HCT116 (cell line): ENCODE measurements at regions of chr7 and their contacts with region 1.

Region 1: GRCh38 chr7:10889266-10889898 is 84.3 kb upstream of the PHF14 start:
- DNase-seq: peak; percentile 48
- ATAC-seq: peak; percentile 91
- H3K4me3 ChIP-seq: no peak overlapping the region
- H3K27ac ChIP-seq: no peak overlapping the region
- H3K4me1 ChIP-seq: no peaks in the 10 kb centered on the region; a peak in 1 of 4 replicates
- H3K27me3 ChIP-seq: no peaks in the 10 kb centered on the region
- CTCF ChIP-seq: peak; percentile 51 to 94 (median 73); a peak in 5 of 6 replicates
- POLR2A ChIP-seq: no peak
- RAD21 ChIP-seq: peak; percentile 84

Region 2: GRCh38 chr7:10412422-10413019 is 476.9 kb before region 1 on chr7:
- CTCF ChIA-PET with region 1: interaction called, 3 read pairs
- POLR2A ChIA-PET with region 1: no interaction called
- RAD21 ChIA-PET with region 1: no interaction called
- intact Hi-C with region 1: loop called (anchors 10 kb)
- DNase-seq: peak; percentile 16
- ATAC-seq: peak; percentile 54; the same call in 1 of the 2 replicates
- H3K4me3 ChIP-seq: no peak overlapping the region
- H3K27ac ChIP-seq: no peak overlapping the region
- H3K4me1 ChIP-seq: no peaks in the 10 kb centered on the region
- H3K27me3 ChIP-seq: no peaks in the 10 kb centered on the region
- CTCF ChIP-seq: peak; percentile 20 to 54 (median 51); a peak in 4 of 6 replicates
- POLR2A ChIP-seq: no peak
- RAD21 ChIP-seq: peak; percentile 53

Region 3: GRCh38 chr7:10637991-10638390 is 251.4 kb before region 1 on chr7:
- CTCF ChIA-PET with region 1: no interaction called
- POLR2A ChIA-PET with region 1: no interaction called
- RAD21 ChIA-PET with region 1: no interaction called
- intact Hi-C with region 1: loop called (anchors 2 kb)
- DNase-seq: no peak
- ATAC-seq: no peak
- H3K4me3 ChIP-seq: no peak overlapping the region
- H3K27ac ChIP-seq: no peak overlapping the region
- H3K4me1 ChIP-seq: no peaks in the 10 kb centered on the region
- H3K27me3 ChIP-seq: no peaks in the 10 kb centered on the region
- CTCF ChIP-seq: no peak
- POLR2A ChIP-seq: no peak
- RAD21 ChIP-seq: no peak

Region 4: GRCh38 chr7:11212080-11212711 is 322.8 kb after region 1 on chr7:
- CTCF ChIA-PET with region 1: no interaction called
- POLR2A ChIA-PET with region 1: no interaction called
- RAD21 ChIA-PET with region 1: no interaction called
- intact Hi-C with region 1: loop called (anchors 5 kb)
- DNase-seq: peak; percentile 42
- ATAC-seq: peak; percentile 93
- H3K4me3 ChIP-seq: no peak overlapping the region
- H3K27ac ChIP-seq: no peak overlapping the region
- H3K4me1 ChIP-seq: no peaks in the 10 kb centered on the region
- H3K27me3 ChIP-seq: no peaks in the 10 kb centered on the region
- CTCF ChIP-seq: peak; percentile 32 to 85 (median 80); a peak in 5 of 6 replicates
- POLR2A ChIP-seq: no peak
- RAD21 ChIP-seq: peak; percentile 65

Region 5: GRCh38 chr7:11343818-11344413 is 454.5 kb after region 1 on chr7:
- CTCF ChIA-PET with region 1: interaction called, 3 read pairs
- POLR2A ChIA-PET with region 1: no interaction called
- RAD21 ChIA-PET with region 1: no interaction called
- intact Hi-C with region 1: loop called (anchors 5 kb)
- DNase-seq: peak; percentile 22
- ATAC-seq: peak; percentile 54
- H3K4me3 ChIP-seq: no peak overlapping the region
- H3K27ac ChIP-seq: no peak overlapping the region
- H3K4me1 ChIP-seq: no peaks in the 10 kb centered on the region
- H3K27me3 ChIP-seq: no peaks in the 10 kb centered on the region
- CTCF ChIP-seq: peak; percentile 35 to 86 (median 59); a peak in 5 of 6 replicates
- POLR2A ChIP-seq: no peak
- RAD21 ChIP-seq: peak; percentile 76